Left cardiac atrium (tissue), 4 donors: ENCODE measurements at regions of chr3 and their contacts with region 1.

Region 1: DNA sequence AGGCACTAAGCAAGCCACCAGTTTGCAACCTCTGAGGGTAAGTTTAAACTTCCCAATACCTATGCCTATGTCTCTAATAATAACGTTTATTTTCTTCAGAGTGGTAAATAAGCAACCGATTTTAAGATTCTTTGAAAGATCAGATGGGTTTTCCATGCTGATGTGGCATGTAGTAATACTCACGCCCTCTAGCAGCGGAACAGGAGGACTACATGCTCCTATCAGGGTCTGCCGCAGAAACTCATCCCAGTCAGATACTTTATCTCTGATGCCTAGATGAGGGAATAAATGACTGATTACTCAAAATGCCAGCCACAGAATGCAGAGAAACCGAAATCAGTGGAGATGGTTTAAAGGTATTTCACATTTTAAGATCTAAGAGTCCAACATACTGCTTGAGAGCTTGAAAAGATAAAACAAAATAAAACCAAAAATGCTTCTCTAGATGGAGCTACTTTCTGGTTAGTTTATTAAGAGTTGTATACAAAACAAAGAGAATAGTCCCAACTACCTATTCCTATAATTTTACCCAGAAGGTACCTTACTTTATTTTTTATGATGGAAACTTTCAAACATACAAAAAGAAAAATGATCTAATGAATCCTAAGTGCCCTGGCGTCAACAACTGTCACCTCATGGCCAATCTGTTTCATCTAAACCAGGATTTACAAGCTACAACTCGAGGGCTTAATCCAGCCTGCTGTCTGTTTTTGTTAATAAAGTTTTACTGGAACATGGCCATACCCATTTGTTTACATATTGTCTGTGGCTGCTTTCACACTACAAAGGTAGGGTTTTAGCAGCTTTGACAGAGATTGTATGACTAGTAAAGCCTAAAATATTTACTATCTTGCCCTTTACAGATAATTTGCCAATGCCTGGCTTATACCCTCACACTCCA is 37.5 kb upstream of the STIMATE start:
- DNase-seq: peak; percentile 38
- ATAC-seq: peak; percentile 76 to 85

Region 2: GRCh38 chr3:52742418-52743041 is 192.3 kb before region 1 on chr3:
- intact Hi-C with region 1: loop called in 1 of 2 experiments (anchors 10 kb)
- DNase-seq: no peak
- ATAC-seq: peak in 1 of 2 donors; percentile 36

Region 3: GRCh38 chr3:52831500-52832301 is 103.2 kb before region 1 on chr3:
- intact Hi-C with region 1: no loop called
- DNase-seq: peak; percentile 65
- ATAC-seq: peak; percentile 10 to 50